IMR-90 (cell line): ENCODE measurements at regions of chrX and their contacts with region 1.

Region 1: GRCh38 chrX:41084044-41084892 is 977 bp upstream of the USP9X start:
- DNase-seq: peak; percentile 96
- ATAC-seq: peak; percentile 70
- H3K4me3 ChIP-seq: peak overlapping the region; percentile 75
- H3K27ac ChIP-seq: peak overlapping the region; percentile 98
- H3K4me1 ChIP-seq: no peaks in the 10 kb centered on the region
- H3K27me3 ChIP-seq: peaks cover 3% of the 10 kb centered on the region
- CTCF ChIP-seq: no peak
- POLR2A ChIP-seq: peak; percentile 93
- RAD21 ChIP-seq: no peak

Region 2: GRCh38 chrX:40877887-40878286 is 206.4 kb before region 1 on chrX:
- CTCF ChIA-PET with region 1: no interaction called
- POLR2A ChIA-PET with region 1: no interaction called
- dilution Hi-C with region 1: no loop called
- in situ Hi-C with region 1: loop called (anchors 10 kb)
- intact Hi-C with region 1: loop called (anchors 5 kb)
- DNase-seq: peak; percentile 39
- ATAC-seq: 0 out of 2 replicates have a peak, but pooled peaks have one; percentile 35
- H3K4me3 ChIP-seq: no peak overlapping the region
- H3K27ac ChIP-seq: no peak overlapping the region
- H3K4me1 ChIP-seq: no peaks in the 10 kb centered on the region
- H3K27me3 ChIP-seq: peaks cover 2% of the 10 kb centered on the region; the same call in 1 of the 2 replicates
- CTCF ChIP-seq: peak; percentile 55
- POLR2A ChIP-seq: no peak
- RAD21 ChIP-seq: peak; percentile 50

Region 3: DNA sequence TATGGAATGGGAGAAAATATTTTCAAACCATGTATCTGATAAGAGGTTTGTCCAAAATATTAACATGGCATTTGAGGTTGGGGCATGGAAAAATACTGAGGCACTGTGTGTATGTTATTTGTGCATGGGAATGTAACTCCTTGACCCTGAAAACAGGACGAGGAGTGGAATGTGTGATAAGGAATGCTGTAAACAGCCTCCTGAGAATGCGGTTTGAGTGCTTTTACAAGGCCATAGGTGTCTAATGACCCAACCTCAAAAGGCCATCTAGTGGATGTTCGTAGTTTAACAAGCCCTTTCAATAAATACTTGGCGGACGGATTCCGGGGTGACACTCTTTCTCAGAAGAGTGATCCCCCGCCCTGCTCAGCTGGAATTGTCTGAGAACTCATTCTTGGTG is 162.0 kb before region 1 on chrX:
- CTCF ChIA-PET with region 1: no interaction called
- POLR2A ChIA-PET with region 1: no interaction called
- dilution Hi-C with region 1: no loop called
- in situ Hi-C with region 1: no loop called
- intact Hi-C with region 1: loop called (anchors 1 kb)
- DNase-seq: peak; percentile 44
- ATAC-seq: peak; percentile 32
- H3K4me3 ChIP-seq: no peak overlapping the region
- H3K27ac ChIP-seq: no peak overlapping the region
- H3K4me1 ChIP-seq: no peaks in the 10 kb centered on the region
- H3K27me3 ChIP-seq: no peaks in the 10 kb centered on the region; the same call in 1 of the 2 replicates
- CTCF ChIP-seq: peak; percentile 39
- POLR2A ChIP-seq: no peak
- RAD21 ChIP-seq: peak; percentile 40

Region 4: GRCh38 chrX:41010188-41010846 is 74.0 kb before region 1 on chrX:
- CTCF ChIA-PET with region 1: no interaction called
- POLR2A ChIA-PET with region 1: no interaction called
- dilution Hi-C with region 1: no loop called
- in situ Hi-C with region 1: no loop called
- intact Hi-C with region 1: loop called (anchors 1 kb)
- DNase-seq: peak; percentile 88
- ATAC-seq: peak; percentile 95
- H3K4me3 ChIP-seq: peak overlapping the region; percentile 13; the same call in 1 of the 2 replicates
- H3K27ac ChIP-seq: peak overlapping the region; percentile 68
- H3K4me1 ChIP-seq: peaks cover 2% of the 10 kb centered on the region; the same call in 1 of the 2 replicates
- H3K27me3 ChIP-seq: peaks cover 2% of the 10 kb centered on the region; the same call in 1 of the 2 replicates
- CTCF ChIP-seq: peak; percentile 16; the same call in 1 of the 2 replicates
- POLR2A ChIP-seq: peak; percentile 41; the same call in 1 of the 2 replicates
- RAD21 ChIP-seq: 0 out of 2 replicates have a peak, but pooled peaks have one; percentile 3

Region 5: DNA sequence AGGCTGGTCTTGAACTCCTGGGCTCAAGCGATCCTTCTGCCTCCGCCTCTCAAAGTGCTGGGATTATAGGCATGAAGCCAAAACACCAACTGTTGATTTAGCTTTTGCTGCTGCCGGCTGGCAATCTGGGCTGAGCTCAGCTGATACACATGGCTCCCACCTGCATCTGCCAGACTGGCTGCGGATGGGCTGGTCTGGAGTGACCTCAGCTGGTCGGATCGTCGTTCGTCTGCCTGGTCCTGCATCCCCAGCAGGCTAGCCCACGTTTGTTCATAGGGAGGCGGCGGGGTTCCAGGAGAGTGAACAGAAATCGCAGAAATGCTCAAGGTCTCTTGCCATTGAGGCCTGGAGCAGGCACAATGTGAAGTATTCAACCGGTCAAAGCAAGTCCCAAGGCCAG is 175.2 kb after region 1 on chrX:
- CTCF ChIA-PET with region 1: no interaction called
- POLR2A ChIA-PET with region 1: no interaction called
- dilution Hi-C with region 1: no loop called
- in situ Hi-C with region 1: no loop called
- intact Hi-C with region 1: no loop called
- DNase-seq: peak; percentile 28
- ATAC-seq: no peak
- H3K4me3 ChIP-seq: no peak overlapping the region
- H3K27ac ChIP-seq: no peak overlapping the region
- H3K4me1 ChIP-seq: no peaks in the 10 kb centered on the region
- H3K27me3 ChIP-seq: peaks cover 5% of the 10 kb centered on the region; the same call in 1 of the 2 replicates
- CTCF ChIP-seq: no peak
- POLR2A ChIP-seq: no peak
- RAD21 ChIP-seq: no peak